Colonic mucosa (tissue), 4 donors: ENCODE measurements at regions of chr2 and their contacts with region 1.

Region 1: DNA sequence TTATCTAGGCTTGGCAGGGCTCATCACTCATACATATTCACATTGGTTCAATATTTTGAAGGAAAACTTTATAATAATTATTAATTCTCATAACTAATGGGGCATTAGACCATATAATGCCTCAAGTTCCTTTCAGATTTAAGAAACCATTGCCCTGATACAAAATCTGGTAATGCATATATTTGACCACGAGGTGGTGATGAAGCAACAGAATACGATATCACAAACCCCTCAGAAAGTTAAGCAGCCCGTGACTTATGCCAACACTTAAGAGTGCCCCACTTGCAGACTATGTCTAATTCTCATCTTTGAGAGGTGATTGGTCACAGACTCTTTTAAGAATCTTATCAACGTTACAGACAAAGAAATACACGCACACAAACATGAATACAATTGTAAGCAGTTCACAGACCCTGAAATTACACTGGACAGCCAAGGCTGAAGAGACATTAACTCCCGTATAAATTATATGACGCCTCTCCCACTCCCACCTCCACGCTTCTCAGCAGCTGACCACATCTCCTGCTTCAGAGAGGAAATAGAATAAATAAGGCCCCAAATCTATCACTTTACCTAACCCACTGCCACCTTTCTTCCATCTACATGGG is 20.7 kb upstream of the DNAH6 start:
- DNase-seq: peak; percentile 52
- H3K4me3 ChIP-seq: no peak overlapping the region
- H3K27ac ChIP-seq: no peak overlapping the region
- H3K4me1 ChIP-seq: no peaks in the 10 kb centered on the region
- H3K27me3 ChIP-seq: no peaks in the 10 kb centered on the region
- CTCF ChIP-seq: peak; percentile 67

Region 2: GRCh38 chr2:84631047-84631446 is 135.4 kb after region 1 on chr2:
- intact Hi-C with region 1: loop called (anchors 2 kb)
- DNase-seq: no peak
- H3K4me3 ChIP-seq: no peak overlapping the region
- H3K27ac ChIP-seq: no peak overlapping the region
- H3K4me1 ChIP-seq: no peaks in the 10 kb centered on the region
- H3K27me3 ChIP-seq: no peaks in the 10 kb centered on the region
- CTCF ChIP-seq: peak; percentile 56

Region 3: DNA sequence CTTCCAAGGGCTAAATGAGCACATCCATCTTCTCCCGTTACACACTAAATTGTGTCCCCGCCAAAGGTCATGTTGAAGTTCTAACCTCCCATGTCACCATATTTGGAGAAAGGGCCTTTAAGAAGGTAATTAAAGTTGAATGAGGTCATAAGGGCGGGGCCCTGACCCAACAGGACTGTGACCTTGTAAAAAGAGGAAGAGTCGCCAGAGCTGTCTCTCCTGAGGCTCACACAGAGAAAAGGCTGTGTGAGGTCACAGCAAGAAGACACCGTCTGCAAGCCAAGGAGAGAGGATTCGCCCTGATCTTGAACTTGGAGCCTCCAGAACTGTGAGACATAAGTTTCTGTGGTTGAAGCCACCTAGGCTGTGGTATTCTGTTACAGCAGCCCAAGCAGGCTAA is 361.1 kb after region 1 on chr2:
- intact Hi-C with region 1: loop called (anchors 5 kb)
- DNase-seq: no peak
- H3K4me3 ChIP-seq: no peak overlapping the region
- H3K27ac ChIP-seq: no peak overlapping the region
- H3K4me1 ChIP-seq: no peaks in the 10 kb centered on the region
- H3K27me3 ChIP-seq: no peaks in the 10 kb centered on the region
- CTCF ChIP-seq: no peak

Region 4: DNA sequence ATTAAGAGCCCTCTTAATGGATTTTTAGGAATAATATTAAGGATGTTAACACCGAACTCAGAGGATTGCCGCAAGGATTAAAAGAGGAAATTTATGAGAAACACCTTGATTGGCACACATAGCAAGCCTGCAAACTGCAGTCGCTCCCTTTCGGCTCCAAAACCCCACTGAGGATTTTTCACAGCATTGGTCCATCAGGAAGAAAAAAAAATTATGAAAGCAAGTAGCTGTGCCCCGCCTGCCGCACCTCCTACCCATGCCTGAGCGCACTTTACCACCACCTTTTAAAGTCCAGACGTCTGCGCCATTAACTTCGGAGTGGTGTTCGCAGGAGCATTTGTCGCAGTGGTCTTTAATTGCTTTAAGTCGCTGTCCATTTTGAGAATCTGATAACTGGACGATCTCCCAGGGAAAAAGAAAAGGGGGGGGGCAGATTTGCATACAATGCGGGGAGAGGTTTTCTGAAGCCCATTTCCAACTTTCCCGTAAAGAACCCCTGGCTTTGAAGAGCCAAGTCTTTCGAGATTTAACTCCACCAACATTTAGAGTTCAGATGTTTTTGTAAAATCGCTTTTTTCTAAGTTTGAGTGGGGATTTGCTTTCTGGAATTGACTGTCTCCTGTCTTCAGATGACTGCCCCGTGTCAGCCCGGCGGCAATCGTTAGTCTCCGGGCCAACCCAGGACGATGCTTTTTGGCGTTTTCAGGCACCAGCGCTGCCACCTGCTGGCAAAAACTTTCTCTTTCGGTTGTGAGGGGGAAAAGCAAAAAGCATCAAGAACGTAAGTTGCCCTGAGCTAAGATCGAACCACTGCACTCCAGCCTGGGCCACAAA is 386.2 kb after region 1 on chr2:
- intact Hi-C with region 1: loop called (anchors 5 kb)
- DNase-seq: peak; percentile 94
- H3K4me3 ChIP-seq: peak overlapping the region; percentile 65
- H3K27ac ChIP-seq: peak overlapping the region; percentile 66
- H3K4me1 ChIP-seq: no peaks in the 10 kb centered on the region
- H3K27me3 ChIP-seq: peaks cover 5% of the 10 kb centered on the region
- CTCF ChIP-seq: peak; percentile 44

Region 5: GRCh38 chr2:84925724-84926376 is 430.2 kb after region 1 on chr2:
- intact Hi-C with region 1: loop called (anchors 5 kb)
- DNase-seq: peak; percentile 100
- H3K4me3 ChIP-seq: peak overlapping the region; percentile 29
- H3K27ac ChIP-seq: peak overlapping the region; percentile 46
- H3K4me1 ChIP-seq: no peaks in the 10 kb centered on the region
- H3K27me3 ChIP-seq: no peaks in the 10 kb centered on the region
- CTCF ChIP-seq: peak; percentile 99